Activated CD8-positive, alpha-beta T cell treated with anti-CD3 and anti-CD28 coated beads for 36 hours (primary cell): ENCODE measurements at regions of chr17 and their contacts with region 1.

Region 1: GRCh38 chr17:43846221-43846712 is 709 bp upstream of the CD300LG start:
- DNase-seq: peak; percentile 85
- ATAC-seq: peak; percentile 100
- H3K4me3 Mint-ChIP-seq: no peak overlapping the region
- H3K27ac Mint-ChIP-seq: no peak overlapping the region
- H3K4me1 Mint-ChIP-seq: no peaks in the 10 kb centered on the region
- H3K27me3 Mint-ChIP-seq: peaks cover 12% of the 10 kb centered on the region
- CTCF ChIP-seq: peak; percentile 95

Region 2: DNA sequence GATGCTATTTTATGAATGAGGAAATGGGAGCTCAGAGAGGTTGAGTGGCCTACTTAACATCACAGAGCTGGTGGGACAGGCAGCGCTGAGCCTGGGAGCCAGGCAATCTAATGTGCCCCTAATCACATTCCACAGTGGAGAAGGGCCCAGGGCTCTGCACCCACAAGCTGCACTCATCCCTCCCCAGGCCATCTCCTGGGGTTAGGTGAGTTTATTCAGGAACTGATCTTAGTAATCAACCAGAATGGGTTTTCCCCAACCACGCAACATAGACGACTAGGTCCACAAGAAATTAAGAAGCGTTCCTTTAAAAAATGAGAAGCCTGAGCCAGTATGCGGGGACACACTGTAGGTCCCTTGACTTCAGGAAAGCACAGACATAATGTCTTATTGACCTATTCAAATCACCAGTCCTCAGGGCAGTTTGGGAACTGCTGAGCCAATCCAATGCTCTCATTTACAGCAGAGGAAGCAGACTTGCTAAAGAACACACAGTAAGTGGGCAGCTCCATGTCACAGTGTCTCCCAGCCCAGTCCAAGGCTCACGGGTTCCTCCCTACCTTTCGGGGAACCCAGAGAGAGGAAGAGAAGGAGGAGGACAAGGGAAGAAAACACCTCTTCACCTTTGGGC is 15.6 kb before region 1 on chr17:
- CTCF ChIA-PET with region 1: interaction called, 29 read pairs
- POLR2A ChIA-PET with region 1: interaction called, 5 read pairs
- intact Hi-C with region 1: no loop called
- DNase-seq: peak; percentile 19
- ATAC-seq: peak; percentile 43
- H3K4me3 Mint-ChIP-seq: no peak overlapping the region
- H3K27ac Mint-ChIP-seq: no peak overlapping the region
- H3K4me1 Mint-ChIP-seq: peaks cover 7% of the 10 kb centered on the region
- H3K27me3 Mint-ChIP-seq: peaks cover 25% of the 10 kb centered on the region
- CTCF ChIP-seq: no peak

Region 3: GRCh38 chr17:43857942-43858600 is 11.8 kb after region 1 on chr17:
- CTCF ChIA-PET with region 1: interaction called, 23 read pairs
- POLR2A ChIA-PET with region 1: no interaction called
- intact Hi-C with region 1: no loop called
- DNase-seq: no peak
- ATAC-seq: no peak
- H3K4me3 Mint-ChIP-seq: no peak overlapping the region
- H3K27ac Mint-ChIP-seq: no peak overlapping the region
- H3K4me1 Mint-ChIP-seq: no peaks in the 10 kb centered on the region
- H3K27me3 Mint-ChIP-seq: peaks cover 6% of the 10 kb centered on the region
- CTCF ChIP-seq: no peak

Region 4: DNA sequence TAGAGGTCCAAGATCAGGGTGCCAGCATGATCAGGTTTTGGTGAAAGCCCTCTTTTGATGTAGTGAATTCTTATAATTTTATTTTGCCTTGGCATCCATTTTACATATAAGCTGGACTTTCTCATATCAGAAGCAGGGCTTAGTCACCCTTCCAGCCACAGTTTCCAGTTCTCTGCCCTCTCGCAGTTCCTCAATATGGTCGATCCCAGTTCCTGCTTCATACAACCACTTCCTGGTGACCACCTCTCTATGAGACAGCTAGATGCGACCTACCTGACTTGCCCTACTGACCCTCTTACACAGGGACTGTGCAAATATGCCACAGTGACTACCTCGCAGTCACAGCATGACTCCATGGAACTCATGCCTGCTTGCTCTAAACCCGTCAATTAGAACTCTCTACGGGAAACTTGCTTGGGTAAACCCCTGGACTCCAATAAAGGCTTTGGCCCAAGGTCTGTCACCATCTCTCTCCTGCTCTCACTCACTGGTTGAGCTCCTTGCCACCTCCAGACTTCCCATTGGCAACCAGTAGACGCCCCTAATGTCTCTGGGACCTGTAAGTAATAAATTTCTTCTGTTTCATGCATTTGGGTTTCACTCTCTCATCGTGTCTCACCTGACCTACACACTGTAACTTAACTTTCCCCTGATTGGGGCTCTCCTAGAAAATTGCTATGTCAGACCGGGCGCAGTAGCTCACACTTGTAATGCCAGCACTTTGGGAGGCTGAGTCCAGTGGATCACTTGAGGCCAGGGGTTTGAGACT is 22.1 kb after region 1 on chr17:
- CTCF ChIA-PET with region 1: interaction called, 16 read pairs
- POLR2A ChIA-PET with region 1: no interaction called
- intact Hi-C with region 1: no loop called
- DNase-seq: no peak
- ATAC-seq: no peak
- H3K4me3 Mint-ChIP-seq: no peak overlapping the region
- H3K27ac Mint-ChIP-seq: no peak overlapping the region
- H3K4me1 Mint-ChIP-seq: no peaks in the 10 kb centered on the region
- H3K27me3 Mint-ChIP-seq: peaks cover 14% of the 10 kb centered on the region
- CTCF ChIP-seq: no peak

Region 5: GRCh38 chr17:43917348-43918018 is 71.2 kb after region 1 on chr17:
- CTCF ChIA-PET with region 1: no interaction called
- POLR2A ChIA-PET with region 1: no interaction called
- intact Hi-C with region 1: no loop called
- DNase-seq: peak; percentile 65
- ATAC-seq: peak; percentile 78
- H3K4me3 Mint-ChIP-seq: peak overlapping the region; percentile 63
- H3K27ac Mint-ChIP-seq: peak overlapping the region; percentile 61
- H3K4me1 Mint-ChIP-seq: peaks cover 7% of the 10 kb centered on the region
- H3K27me3 Mint-ChIP-seq: no peaks in the 10 kb centered on the region
- CTCF ChIP-seq: peak; percentile 36

Region 6: DNA sequence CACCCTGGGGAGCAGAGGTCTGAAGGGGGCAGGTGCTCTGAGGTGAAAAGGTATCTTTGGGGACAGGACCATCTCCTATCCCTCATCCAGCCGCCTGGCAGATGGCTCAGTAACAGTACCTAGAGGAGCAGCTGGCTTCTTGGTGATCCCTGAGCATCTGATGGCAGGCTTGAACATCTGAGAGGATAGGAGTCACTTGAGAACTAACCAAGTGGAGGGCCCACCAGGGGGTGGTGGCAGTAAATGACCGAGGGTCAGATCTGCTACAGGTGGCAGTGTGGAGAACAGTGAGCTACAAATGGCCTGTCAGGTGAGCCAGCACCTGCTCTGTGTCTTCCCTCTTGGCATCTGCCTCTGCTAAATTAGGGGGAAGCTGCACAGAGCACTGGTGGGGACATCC is 309.2 kb after region 1 on chr17:
- CTCF ChIA-PET with region 1: no interaction called
- POLR2A ChIA-PET with region 1: no interaction called
- intact Hi-C with region 1: no loop called
- DNase-seq: no peak
- ATAC-seq: no peak
- H3K4me3 Mint-ChIP-seq: no peak overlapping the region
- H3K27ac Mint-ChIP-seq: no peak overlapping the region
- H3K4me1 Mint-ChIP-seq: no peaks in the 10 kb centered on the region
- H3K27me3 Mint-ChIP-seq: no peaks in the 10 kb centered on the region
- CTCF ChIP-seq: no peak